ENCODE measurements at regions of chr3 and their contacts with region 1.

Region 1: DNA sequence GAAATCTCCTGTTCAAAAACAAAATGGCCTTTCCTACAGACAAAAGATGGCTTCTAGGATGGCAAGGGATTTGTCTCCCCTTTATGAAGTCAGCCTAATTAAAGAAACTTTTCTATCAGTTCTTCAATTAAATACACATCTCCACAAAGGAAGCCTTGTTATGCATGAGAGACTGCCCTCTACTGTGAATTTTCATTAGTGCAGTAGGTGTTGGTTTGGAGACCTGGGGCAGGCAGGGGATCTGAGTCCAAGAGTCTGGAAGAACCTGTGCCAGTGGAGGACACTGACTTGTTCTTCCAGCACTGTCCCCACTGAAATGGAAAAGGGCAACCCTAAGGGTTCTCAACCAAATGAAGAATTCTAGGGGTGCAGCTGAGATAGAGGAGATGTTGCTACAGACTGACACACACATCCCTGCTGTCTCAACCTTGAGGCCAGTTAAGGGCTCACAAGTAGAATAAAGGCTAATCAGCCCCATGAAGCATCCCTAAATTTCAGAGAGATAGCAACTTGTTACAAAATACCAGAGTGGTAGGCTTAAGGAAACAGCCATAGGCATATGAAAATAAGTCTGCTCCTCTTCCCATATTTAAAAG is 174.0 kb upstream of the PRICKLE2 start:
- DNase-seq: peak; percentile 55
- H3K4me3 ChIP-seq: no peak overlapping the region
- H3K27ac ChIP-seq: peak overlapping the region in 3 of 4 donors; percentile 62 to 76 (median 64)
- H3K4me1 ChIP-seq: peaks cover 3 to 26% (median 22%) of the 10 kb centered on the region in 4 donors
- H3K27me3 ChIP-seq: no peaks in the 10 kb centered on the region
- CTCF ChIP-seq: peak; percentile 80 to 83 (median 82)
- EP300 ChIP-seq: no peak
- POLR2A ChIP-seq: no peak

Region 2: DNA sequence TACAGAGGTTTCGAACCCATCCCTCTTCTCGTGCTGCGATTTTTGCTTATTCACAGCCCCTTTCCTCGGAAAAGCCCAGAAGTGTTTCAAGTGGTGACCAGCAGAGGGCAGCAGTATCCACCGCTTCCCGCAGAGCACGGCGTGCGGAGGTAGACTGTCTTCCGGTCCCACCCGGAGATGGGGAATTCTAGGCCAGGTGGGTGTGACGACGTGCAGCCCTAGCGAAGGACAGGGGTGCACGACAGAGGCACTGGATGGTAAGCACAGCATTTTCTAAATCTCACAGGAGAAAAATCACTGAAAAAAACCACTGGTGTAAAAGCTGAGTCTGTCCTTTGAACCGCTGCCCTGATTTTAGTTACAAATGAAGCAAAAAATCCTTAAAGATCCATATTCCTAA is 368.6 kb before region 1 on chr3:
- intact Hi-C with region 1: loop called (anchors 2 kb)
- DNase-seq: no peak
- H3K4me3 ChIP-seq: peak overlapping the region; percentile 19 to 42 (median 34)
- H3K27ac ChIP-seq: peak overlapping the region in 2 of 4 donors; percentile 33 to 62
- H3K4me1 ChIP-seq: peaks cover 0 to 23% (median 19%) of the 10 kb centered on the region in 4 donors
- H3K27me3 ChIP-seq: no peaks in the 10 kb centered on the region
- CTCF ChIP-seq: peak; percentile 90 to 93 (median 90)
- EP300 ChIP-seq: no peak
- POLR2A ChIP-seq: no peak

Region 3: GRCh38 chr3:64163755-64164148 is 235.6 kb before region 1 on chr3:
- intact Hi-C with region 1: loop called (anchors 10 kb)
- DNase-seq: no peak
- H3K4me3 ChIP-seq: no peak overlapping the region
- H3K27ac ChIP-seq: peak overlapping the region; percentile 7 to 56 (median 48)
- H3K4me1 ChIP-seq: peaks cover 31 to 86% (median 82%) of the 10 kb centered on the region in 4 donors
- H3K27me3 ChIP-seq: no peaks in the 10 kb centered on the region
- CTCF ChIP-seq: no peak
- EP300 ChIP-seq: no peak
- POLR2A ChIP-seq: no peak

Region 4: DNA sequence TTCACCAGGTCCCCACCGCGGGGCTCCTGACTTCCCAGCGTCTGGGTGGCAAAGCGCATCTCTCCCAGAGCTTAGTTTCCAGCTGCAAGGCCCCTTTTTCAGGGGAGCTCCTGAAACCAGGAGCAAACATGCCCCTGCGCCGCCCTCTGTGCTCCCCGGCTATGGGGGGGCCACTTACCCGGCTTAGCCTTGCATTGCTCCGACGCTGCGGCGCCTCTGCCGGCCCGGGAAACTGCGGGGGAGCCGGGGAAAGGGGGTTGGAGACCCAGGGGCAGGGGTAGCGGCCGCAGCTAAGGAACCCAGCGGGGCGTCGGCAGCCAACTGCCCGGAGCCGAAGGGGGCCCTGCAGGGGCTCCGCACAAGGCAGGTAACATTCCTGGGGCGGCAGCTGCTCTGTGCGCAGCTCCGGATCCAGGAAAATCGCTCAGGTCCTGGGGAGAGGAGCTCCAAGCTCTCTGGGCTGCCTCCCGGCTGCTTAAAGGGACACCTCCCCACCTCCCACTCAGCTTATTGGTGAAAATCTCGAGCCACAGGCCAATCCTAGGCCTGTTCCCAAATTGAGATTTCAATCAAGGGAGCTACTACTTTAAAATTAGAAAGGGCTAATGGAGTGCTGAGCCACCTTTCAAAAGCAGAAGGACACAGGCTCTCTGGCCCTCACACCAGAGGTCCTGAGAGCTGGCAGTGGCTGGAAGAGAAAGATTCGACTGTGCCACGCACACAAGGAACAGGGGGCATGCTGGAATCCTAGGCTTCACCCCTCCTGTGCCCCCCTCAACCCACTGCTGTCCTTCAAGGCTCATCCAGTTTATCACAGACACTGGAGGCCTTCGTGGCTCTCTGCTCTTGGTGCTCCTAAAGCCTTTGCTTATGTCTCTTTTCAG is 131.3 kb before region 1 on chr3:
- intact Hi-C with region 1: loop called (anchors 2 kb)
- DNase-seq: peak; percentile 93
- H3K4me3 ChIP-seq: peak overlapping the region; percentile 78 to 80 (median 80)
- H3K27ac ChIP-seq: peak overlapping the region; percentile 92 to 96 (median 94)
- H3K4me1 ChIP-seq: peaks cover 37 to 48% (median 41%) of the 10 kb centered on the region in 4 donors
- H3K27me3 ChIP-seq: no peaks in the 10 kb centered on the region
- CTCF ChIP-seq: peak in 1 of 3 experiments; percentile 9
- EP300 ChIP-seq: no peak
- POLR2A ChIP-seq: peak; percentile 57

Region 5: DNA sequence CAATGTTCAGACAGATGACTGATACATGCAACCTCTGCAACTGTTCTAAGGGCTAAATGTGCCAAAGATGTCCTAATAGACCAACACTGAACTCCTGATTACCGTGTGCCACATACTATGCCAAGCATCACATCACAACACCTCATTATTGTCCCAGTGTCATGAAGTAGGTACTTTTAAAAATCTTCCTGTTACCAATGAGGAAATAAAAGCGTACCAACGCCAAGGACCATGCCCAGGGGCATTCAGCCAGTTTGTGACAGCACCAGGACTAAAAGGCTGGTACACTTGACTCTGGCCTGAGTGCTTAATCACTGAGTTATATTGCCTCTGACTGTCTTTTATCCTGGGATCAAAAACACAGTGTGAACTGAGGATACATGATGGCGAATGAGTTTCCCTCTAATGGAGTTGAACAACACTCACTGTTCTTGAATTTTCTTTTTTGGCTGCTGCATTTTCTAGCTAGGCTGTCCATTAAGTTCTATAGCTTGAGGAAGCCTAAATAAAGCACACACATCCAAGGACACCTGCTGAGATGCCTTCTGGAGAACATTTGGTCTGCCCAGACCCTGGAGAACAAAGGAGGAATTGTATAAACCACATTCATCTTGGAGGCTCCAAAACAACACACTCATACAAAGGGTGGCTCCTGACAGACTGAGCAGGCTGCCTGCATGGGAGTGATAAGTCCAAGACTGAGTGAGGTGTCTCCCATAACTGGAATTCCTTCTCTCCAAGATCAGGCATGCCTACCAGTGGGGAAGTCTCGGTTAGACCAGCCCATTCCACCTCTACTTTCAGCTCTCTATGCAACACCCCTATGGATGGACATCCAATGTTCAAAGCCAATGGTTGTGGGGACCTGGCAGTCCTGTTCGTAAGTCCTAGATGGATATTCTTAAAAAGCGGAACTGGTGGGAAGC is 47.3 kb before region 1 on chr3:
- intact Hi-C with region 1: loop called (anchors 5 kb)
- DNase-seq: peak; percentile 84
- H3K4me3 ChIP-seq: no peak overlapping the region
- H3K27ac ChIP-seq: peak overlapping the region; percentile 70 to 78 (median 74)
- H3K4me1 ChIP-seq: peaks cover 19 to 88% (median 71%) of the 10 kb centered on the region in 4 donors
- H3K27me3 ChIP-seq: no peaks in the 10 kb centered on the region
- CTCF ChIP-seq: no peak
- EP300 ChIP-seq: no peak
- POLR2A ChIP-seq: no peak

Region 6: DNA sequence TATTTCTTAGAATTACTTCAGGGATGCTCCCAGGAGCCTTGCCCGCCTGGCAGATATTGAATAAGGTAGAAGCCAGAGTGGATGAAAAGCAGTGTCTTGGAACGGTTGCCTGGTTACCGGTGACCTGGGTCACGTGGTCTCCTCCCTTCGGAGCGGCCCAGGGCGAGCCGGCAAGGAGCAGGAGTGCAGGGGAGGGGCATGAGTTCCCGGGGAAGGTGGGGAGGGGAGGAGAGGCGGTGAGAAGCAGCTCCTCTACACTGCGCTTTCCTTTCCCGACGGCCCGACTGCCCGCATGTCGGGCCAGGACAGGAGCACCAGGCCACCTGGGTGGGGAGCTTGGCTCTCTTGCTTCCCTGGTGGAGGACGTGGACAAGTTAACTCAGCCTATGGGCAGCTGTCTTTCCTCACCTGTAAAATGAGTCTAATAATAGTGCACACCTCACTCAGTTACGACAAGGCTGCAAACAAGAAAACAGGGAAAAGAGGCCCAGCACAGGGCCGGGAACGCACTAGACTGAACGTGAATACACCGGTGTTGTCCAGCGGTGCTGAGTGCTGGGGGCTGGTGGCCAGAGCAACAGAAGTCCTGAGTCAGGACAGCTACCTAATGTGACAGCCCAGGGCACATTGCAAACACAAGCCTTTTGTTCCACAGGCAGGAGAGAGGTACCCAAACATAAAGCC is 90.2 kb after region 1 on chr3:
- intact Hi-C with region 1: loop called (anchors 5 kb)
- DNase-seq: no peak
- H3K4me3 ChIP-seq: peak overlapping the region; percentile 16 to 27 (median 22)
- H3K27ac ChIP-seq: no peak overlapping the region
- H3K4me1 ChIP-seq: peaks cover 4 to 22% (median 16%) of the 10 kb centered on the region in 4 donors
- H3K27me3 ChIP-seq: no peaks in the 10 kb centered on the region
- CTCF ChIP-seq: no peak
- EP300 ChIP-seq: no peak
- POLR2A ChIP-seq: no peak

Region 7: GRCh38 chr3:64518950-64519349 is 119.6 kb after region 1 on chr3:
- intact Hi-C with region 1: no loop called
- DNase-seq: no peak
- H3K4me3 ChIP-seq: no peak overlapping the region
- H3K27ac ChIP-seq: no peak overlapping the region
- H3K4me1 ChIP-seq: no peaks in the 10 kb centered on the region
- H3K27me3 ChIP-seq: no peaks in the 10 kb centered on the region
- CTCF ChIP-seq: no peak
- EP300 ChIP-seq: no peak
- POLR2A ChIP-seq: no peak

Region 8: GRCh38 chr3:64634417-64634816 is 235.1 kb after region 1 on chr3:
- intact Hi-C with region 1: no loop called
- DNase-seq: no peak
- H3K4me3 ChIP-seq: no peak overlapping the region
- H3K27ac ChIP-seq: no peak overlapping the region
- H3K4me1 ChIP-seq: no peaks in the 10 kb centered on the region
- H3K27me3 ChIP-seq: no peaks in the 10 kb centered on the region
- CTCF ChIP-seq: no peak
- EP300 ChIP-seq: no peak
- POLR2A ChIP-seq: no peak

Measured in esophagus muscularis mucosa (tissue), 4 donors.